ENCODE measurements at regions of chr18 and their contacts with region 1.

Region 1: DNA sequence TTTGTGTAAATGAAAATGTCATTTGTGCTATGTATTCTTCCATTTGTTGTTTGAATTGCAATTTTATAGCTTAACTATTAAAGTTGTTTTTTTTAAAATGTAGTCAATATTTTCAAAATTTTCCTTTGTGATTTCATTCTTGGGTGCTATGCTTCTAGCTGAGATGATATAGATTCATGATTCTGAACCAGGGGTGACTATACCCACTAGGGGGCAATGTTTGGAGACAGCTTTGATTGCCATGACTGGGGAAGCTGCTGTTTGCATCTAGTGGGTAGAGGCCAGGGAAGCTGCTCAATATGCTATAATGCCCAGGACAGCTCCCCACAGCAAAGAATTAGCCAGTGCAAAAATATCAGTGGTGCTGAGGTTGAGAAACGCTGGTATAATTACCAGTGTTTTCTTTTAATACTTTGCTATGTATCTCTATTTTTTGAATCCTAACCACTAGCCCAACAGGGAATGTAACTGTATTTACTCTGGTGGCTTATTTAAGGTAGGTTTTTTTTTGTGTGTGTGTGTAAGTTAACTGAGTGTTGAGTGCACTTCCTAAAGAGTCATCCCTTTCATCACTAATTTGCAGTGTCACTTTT is 99.7 kb downstream of the MEP1B start:
- DNase-seq: peak; percentile 77
- H3K4me3 ChIP-seq: no peak overlapping the region
- H3K27ac ChIP-seq: no peak overlapping the region
- H3K4me1 ChIP-seq: no peaks in the 10 kb centered on the region
- H3K27me3 ChIP-seq: peaks cover 2 to 8% of the 10 kb centered on the region in 2 experiments
- CTCF ChIP-seq: peak; percentile 66 to 74
- POLR2A ChIP-seq: no peak

Region 2: GRCh38 chr18:31685097-31686082 is 604.2 kb before region 1 on chr18:
- CTCF ChIA-PET with region 1: no interaction called
- POLR2A ChIA-PET with region 1: no interaction called
- dilution Hi-C with region 1: no loop called
- intact Hi-C with region 1: no loop called
- DNase-seq: peak; percentile 83
- H3K4me3 ChIP-seq: peak overlapping the region; percentile 52 to 68 (median 59)
- H3K27ac ChIP-seq: peak overlapping the region; percentile 39
- H3K4me1 ChIP-seq: peaks cover 31% of the 10 kb centered on the region
- H3K27me3 ChIP-seq: no peaks in the 10 kb centered on the region
- CTCF ChIP-seq: peak; percentile 35 to 50
- POLR2A ChIP-seq: peak; percentile 48

Region 3: DNA sequence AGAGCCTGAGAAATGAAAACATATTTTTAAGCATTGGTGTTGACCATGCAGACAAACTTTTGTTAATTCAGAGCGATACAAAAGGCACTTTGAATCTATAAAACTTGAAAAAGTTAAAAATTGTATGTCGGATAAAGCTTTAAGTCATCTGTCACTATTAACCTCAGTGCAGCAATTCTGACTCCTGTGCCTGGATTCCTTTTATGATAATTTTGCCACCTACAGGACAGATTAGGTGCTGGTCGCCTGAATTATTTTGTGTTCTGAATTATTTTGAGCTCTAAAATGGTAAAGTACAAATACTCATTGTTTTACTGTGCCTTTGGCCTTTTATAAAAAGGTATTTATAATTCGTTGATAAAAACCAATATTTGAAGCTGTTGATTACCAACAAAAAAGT is 217.3 kb before region 1 on chr18:
- CTCF ChIA-PET with region 1: no interaction called
- POLR2A ChIA-PET with region 1: no interaction called
- dilution Hi-C with region 1: no loop called
- intact Hi-C with region 1: no loop called
- DNase-seq: peak; percentile 14
- H3K4me3 ChIP-seq: no peak overlapping the region
- H3K27ac ChIP-seq: no peak overlapping the region
- H3K4me1 ChIP-seq: no peaks in the 10 kb centered on the region
- H3K27me3 ChIP-seq: no peaks in the 10 kb centered on the region
- CTCF ChIP-seq: peak; percentile 7 to 34
- POLR2A ChIP-seq: no peak

Region 4: DNA sequence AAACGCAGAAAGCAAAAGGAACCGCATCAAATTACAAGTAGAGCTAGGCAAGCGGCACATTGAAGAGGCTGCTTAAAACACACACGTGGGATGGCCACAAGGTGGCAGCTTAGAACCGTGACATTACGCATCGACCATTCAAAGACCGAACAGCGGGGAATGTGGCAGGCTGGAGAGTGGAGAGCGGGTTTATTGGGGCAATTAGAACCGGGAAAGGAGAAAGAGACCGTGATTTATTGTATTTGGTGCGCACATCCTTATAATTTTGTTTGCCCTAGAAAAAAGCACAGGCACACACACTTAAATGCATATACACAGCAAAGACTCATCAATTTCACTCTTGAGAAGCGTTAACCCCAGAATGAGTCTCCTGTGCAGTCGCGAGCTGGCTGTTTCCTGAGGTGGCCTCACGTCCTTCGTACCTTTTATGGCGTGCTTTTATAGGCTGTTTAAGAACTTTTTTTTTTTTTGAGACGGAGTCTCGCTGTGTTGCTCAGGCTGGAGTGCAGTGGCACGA is 131.4 kb before region 1 on chr18:
- CTCF ChIA-PET with region 1: interaction called, 11 read pairs
- POLR2A ChIA-PET with region 1: no interaction called
- dilution Hi-C with region 1: no loop called
- intact Hi-C with region 1: no loop called
- DNase-seq: peak; percentile 83
- H3K4me3 ChIP-seq: no peak overlapping the region
- H3K27ac ChIP-seq: no peak overlapping the region
- H3K4me1 ChIP-seq: no peaks in the 10 kb centered on the region
- H3K27me3 ChIP-seq: peaks cover 0 to 4% of the 10 kb centered on the region in 2 experiments
- CTCF ChIP-seq: peak; percentile 78 to 85
- POLR2A ChIP-seq: no peak

Region 5: GRCh38 chr18:32175265-32175664 is 114.3 kb before region 1 on chr18:
- CTCF ChIA-PET with region 1: no interaction called
- POLR2A ChIA-PET with region 1: no interaction called
- dilution Hi-C with region 1: no loop called
- intact Hi-C with region 1: no loop called
- DNase-seq: no peak
- H3K4me3 ChIP-seq: no peak overlapping the region
- H3K27ac ChIP-seq: no peak overlapping the region
- H3K4me1 ChIP-seq: no peaks in the 10 kb centered on the region
- H3K27me3 ChIP-seq: no peaks in the 10 kb centered on the region
- CTCF ChIP-seq: no peak
- POLR2A ChIP-seq: no peak

Region 6: GRCh38 chr18:32276906-32277305 is 12.7 kb before region 1 on chr18:
- CTCF ChIA-PET with region 1: interaction called, 20 read pairs
- POLR2A ChIA-PET with region 1: no interaction called
- dilution Hi-C with region 1: no loop called
- intact Hi-C with region 1: no loop called
- DNase-seq: no peak
- H3K4me3 ChIP-seq: no peak overlapping the region
- H3K27ac ChIP-seq: no peak overlapping the region
- H3K4me1 ChIP-seq: no peaks in the 10 kb centered on the region
- H3K27me3 ChIP-seq: peaks cover 1 to 2% of the 10 kb centered on the region in 2 experiments
- CTCF ChIP-seq: no peak
- POLR2A ChIP-seq: no peak

Region 7: DNA sequence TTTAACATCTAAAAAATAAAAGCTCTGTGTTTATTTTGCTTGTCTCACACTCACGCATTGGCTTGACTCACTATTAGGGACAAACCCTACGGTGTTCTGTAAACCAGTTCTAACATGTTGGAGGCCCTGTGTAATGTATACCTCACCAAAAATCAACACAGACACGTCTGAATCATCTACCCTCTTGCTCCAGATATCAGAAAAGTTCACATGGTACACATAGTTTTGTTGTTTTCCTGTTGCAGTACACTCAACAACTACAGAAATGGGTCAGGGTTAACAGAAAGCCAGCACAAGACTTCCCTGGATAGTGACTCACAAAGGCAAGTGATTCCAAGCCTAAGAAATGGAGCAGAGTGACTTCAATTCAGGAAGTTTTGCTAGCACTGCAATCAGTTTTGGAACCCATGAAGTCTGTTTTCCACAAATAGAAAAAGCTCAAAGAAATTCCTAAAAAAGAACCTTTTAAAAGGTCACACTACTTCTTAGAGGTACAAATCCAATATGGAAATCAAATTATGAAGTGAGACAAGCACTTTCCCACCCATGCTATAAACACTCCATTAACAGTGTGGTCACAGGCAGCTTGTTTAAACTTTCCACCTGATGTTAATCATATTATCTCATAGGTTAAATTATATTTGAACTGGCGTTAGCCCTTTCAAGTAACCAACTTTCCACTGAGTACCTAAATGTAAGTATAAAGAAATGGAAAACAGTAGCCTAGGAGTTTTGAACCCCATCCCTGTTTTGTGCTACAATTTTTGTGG is 93.7 kb after region 1 on chr18:
- CTCF ChIA-PET with region 1: interaction called, 12 read pairs
- POLR2A ChIA-PET with region 1: no interaction called
- dilution Hi-C with region 1: no loop called
- intact Hi-C with region 1: no loop called
- DNase-seq: peak; percentile 99
- H3K4me3 ChIP-seq: no peak overlapping the region
- H3K27ac ChIP-seq: peak overlapping the region; percentile 85
- H3K4me1 ChIP-seq: peaks cover 30% of the 10 kb centered on the region
- H3K27me3 ChIP-seq: no peaks in the 10 kb centered on the region
- CTCF ChIP-seq: no peak
- POLR2A ChIP-seq: no peak

Region 8: GRCh38 chr18:32552421-32553030 is 262.9 kb after region 1 on chr18:
- CTCF ChIA-PET with region 1: interaction called, 32 read pairs
- POLR2A ChIA-PET with region 1: no interaction called
- dilution Hi-C with region 1: no loop called
- intact Hi-C with region 1: loop called (anchors 1 kb)
- DNase-seq: peak; percentile 62
- H3K4me3 ChIP-seq: no peak overlapping the region
- H3K27ac ChIP-seq: no peak overlapping the region
- H3K4me1 ChIP-seq: no peaks in the 10 kb centered on the region
- H3K27me3 ChIP-seq: peaks cover 2 to 5% of the 10 kb centered on the region in 2 experiments
- CTCF ChIP-seq: peak; percentile 53 to 77
- POLR2A ChIP-seq: no peak